Activated CD4-positive, alpha-beta T cell treated with anti-CD3 and anti-CD28 coated beads, Interleukin-2, amount 10 ng/mL, durations not matched to agents 24 days and 14 days (primary cell): ENCODE measurements at regions of chr4 and their contacts with region 1.

Region 1: GRCh38 chr4:103008875-103009729 is 10.4 kb downstream of the SLC9B1 start:
- DNase-seq: peak; percentile 83
- H3K4me3 Mint-ChIP-seq: no peak overlapping the region
- H3K27ac Mint-ChIP-seq: no peak overlapping the region
- H3K4me1 Mint-ChIP-seq: no peaks in the 10 kb centered on the region
- H3K27me3 Mint-ChIP-seq: peaks cover 8% of the 10 kb centered on the region

Region 2: DNA sequence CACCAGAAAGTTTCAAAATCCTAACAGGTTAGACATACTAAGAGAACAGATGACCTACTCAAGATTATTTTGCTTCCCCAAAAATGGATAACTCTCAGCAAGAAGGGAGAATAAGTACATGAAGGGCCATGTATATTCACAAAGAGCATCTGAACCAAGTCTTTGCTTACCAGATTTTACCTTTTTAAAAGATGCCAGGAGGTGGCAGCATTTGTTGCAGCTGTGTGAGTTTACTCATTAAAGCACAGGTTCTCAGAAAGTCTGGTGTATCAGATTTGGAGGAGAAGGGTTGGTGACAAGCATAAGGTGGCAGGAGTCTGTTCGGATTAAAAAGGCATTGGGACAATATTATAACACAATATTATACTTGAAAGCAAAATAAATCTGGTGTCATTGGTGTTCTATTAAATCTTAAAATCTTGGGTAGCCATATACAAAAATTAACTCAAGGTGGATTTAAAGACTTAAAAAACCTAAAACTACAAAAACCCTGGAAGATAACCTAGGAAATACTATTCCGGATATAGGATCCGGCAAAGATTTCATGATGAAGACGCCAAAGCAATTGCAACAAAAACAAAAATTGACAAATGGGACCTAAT is 559.2 kb before region 1 on chr4:
- intact Hi-C with region 1: loop called (anchors 5 kb)
- DNase-seq: peak; percentile 89
- H3K4me3 Mint-ChIP-seq: no peak overlapping the region
- H3K27ac Mint-ChIP-seq: no peak overlapping the region
- H3K4me1 Mint-ChIP-seq: peaks cover 42% of the 10 kb centered on the region
- H3K27me3 Mint-ChIP-seq: no peaks in the 10 kb centered on the region

Region 3: DNA sequence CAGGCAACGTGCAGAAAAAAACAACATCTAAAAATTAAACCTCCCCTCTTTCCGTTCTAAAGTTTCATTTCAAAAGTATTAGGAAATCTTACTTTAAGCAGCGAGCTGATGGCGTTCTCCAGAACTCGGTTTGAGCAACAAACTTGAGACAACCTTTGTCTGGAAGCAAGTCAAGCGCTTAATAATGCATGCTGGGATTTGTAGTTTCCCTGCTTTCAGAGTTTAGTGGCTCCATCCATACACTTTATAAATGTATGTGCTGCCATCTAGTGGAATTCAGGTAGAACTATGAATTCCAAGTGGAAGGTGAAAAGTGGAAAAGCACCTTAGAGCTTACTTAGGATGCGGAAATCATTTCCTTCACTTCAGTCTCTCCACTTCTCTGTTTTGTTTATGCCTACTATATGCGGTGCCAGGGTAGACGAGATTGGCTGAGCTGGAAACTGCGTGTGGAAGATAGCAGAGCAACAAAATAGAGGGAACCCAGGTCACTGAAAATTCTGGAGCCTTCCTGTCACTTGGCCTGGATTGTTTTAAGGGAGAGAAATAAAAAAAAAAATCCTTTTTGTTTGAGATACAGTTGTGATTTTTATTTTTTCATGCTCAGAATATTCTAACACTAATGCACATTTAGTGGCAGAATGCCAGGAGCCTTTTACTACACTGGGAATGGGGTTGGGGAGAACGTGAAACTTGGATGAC is 90.7 kb after region 1 on chr4 and contains the start of gene BDH2:
- intact Hi-C with region 1: no loop called
- DNase-seq: peak; percentile 87
- H3K4me3 Mint-ChIP-seq: peak within 1 kb of the TSS; percentile 84
- H3K27ac Mint-ChIP-seq: peak within 1 kb of the TSS; percentile 83
- H3K4me1 Mint-ChIP-seq: peaks cover 8% of the 10 kb centered on the region
- H3K27me3 Mint-ChIP-seq: no peaks in the 10 kb centered on the region
- total RNA-seq, gene BDH2: 11.0 and 13.2 TPM in 2 replicates